ENCODE measurements at regions of chr13 and their contacts with region 1.

Region 1: DNA sequence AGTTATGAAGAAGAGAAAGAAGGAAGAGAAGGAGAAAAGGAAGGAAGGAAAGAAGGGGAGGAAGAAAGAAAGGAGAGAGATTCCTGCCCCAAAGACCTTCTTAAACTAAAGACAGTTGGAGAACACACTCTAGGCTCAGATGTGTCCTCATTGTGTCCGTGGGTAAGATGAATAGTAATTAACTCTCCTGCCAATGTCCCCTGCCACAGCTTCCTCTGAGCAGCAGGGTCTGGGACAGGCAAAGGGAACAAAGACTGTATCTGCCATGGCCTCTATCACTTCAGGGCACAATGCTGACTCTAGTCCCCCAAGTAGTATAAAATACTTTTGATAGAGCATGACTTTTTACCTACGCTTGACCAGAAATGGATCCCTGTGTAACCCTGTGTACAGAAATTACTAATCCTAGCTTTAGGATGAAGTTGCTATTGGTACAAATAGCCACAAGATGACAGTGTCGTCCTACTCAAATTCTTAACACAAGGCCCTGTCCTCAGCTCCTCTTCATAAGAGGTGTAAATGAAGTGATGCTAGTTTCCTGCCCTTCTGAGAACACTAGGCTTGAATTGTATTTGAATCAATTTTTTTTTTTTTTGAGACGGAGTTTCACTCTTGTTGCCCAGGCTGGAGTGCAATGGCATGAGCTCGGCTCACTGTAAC is 186.2 kb upstream of the GPR12 start:
- DNase-seq: peak; percentile 50 to 71
- ATAC-seq: peak; percentile 92
- H3K4me3 ChIP-seq: no peak overlapping the region
- H3K27ac ChIP-seq: no peak overlapping the region
- H3K4me1 ChIP-seq: no peaks in the 10 kb centered on the region
- CTCF ChIP-seq: peak; percentile 72
- EP300 ChIP-seq: no peak
- POLR2A ChIP-seq: no peak
- RAD21 ChIP-seq: peak; percentile 79 to 89

Region 2: GRCh38 chr13:26957182-26957581 is 10.4 kb after region 1 on chr13:
- CTCF ChIA-PET with region 1: interaction called, 10 read pairs
- POLR2A ChIA-PET with region 1: no interaction called
- DNase-seq: no peak
- ATAC-seq: no peak; a peak in 1 of 6 replicates
- H3K4me3 ChIP-seq: no peak overlapping the region
- H3K27ac ChIP-seq: no peak overlapping the region
- H3K4me1 ChIP-seq: no peaks in the 10 kb centered on the region
- CTCF ChIP-seq: no peak
- EP300 ChIP-seq: no peak
- POLR2A ChIP-seq: no peak
- RAD21 ChIP-seq: no peak

Region 3: DNA sequence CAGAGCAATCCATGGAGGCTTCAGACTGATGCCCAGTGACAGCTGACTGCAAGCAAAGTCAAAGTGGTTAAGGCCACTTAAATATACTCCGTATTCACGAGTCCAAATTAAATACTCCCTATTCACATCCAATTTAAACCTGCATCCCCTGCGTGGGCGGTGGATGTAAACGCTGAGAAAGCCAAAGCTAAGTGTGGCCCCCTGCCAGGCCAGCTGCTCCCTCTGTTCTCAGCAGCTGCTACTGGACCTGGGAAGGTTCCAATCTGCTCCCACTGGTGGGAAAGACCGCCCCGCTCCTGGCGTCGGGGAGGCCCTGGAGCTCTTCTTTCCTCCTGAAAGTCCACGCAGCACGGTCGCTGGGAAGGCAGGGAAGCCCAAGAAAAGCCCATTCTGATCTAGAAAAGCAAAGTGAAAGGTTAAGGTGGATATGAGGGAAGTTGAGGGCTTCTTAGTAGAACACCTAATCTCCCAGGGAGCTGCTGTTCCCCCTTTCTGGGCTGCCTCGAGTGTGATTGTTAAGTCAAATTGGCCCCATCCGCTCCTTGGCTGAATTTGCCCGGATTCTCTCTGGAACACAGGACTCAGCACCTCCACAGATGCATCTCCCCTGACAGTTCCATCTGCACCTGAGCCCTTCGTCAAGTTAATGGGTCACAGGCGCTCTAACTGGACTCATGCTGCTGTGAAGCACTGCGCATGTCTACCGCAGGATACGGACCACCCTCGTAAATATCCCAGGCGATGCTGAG is 19.3 kb after region 1 on chr13:
- CTCF ChIA-PET with region 1: interaction called, 17 read pairs
- POLR2A ChIA-PET with region 1: no interaction called
- DNase-seq: no peak
- ATAC-seq: no peak
- H3K4me3 ChIP-seq: no peak overlapping the region
- H3K27ac ChIP-seq: no peak overlapping the region
- H3K4me1 ChIP-seq: peaks cover 9% of the 10 kb centered on the region
- CTCF ChIP-seq: no peak
- EP300 ChIP-seq: no peak
- POLR2A ChIP-seq: no peak
- RAD21 ChIP-seq: no peak

Region 4: GRCh38 chr13:27985600-27985999 is 1038.8 kb after region 1 on chr13:
- CTCF ChIA-PET with region 1: interaction called, 14 read pairs
- POLR2A ChIA-PET with region 1: no interaction called
- DNase-seq: no peak
- ATAC-seq: no peak
- H3K4me3 ChIP-seq: no peak overlapping the region
- H3K27ac ChIP-seq: no peak overlapping the region
- H3K4me1 ChIP-seq: no peaks in the 10 kb centered on the region
- CTCF ChIP-seq: no peak
- EP300 ChIP-seq: no peak
- POLR2A ChIP-seq: no peak
- RAD21 ChIP-seq: no peak

Measured in A549 (cell line).